Activated naive CD8-positive, alpha-beta T cell treated with anti-CD3 and anti-CD28 coated beads, Interleukin-2, amount 10 ng/mL, durations not matched to agents 7 days and 5 days (primary cell): ENCODE measurements at regions of chr1 and their contacts with region 1.

Region 1: DNA sequence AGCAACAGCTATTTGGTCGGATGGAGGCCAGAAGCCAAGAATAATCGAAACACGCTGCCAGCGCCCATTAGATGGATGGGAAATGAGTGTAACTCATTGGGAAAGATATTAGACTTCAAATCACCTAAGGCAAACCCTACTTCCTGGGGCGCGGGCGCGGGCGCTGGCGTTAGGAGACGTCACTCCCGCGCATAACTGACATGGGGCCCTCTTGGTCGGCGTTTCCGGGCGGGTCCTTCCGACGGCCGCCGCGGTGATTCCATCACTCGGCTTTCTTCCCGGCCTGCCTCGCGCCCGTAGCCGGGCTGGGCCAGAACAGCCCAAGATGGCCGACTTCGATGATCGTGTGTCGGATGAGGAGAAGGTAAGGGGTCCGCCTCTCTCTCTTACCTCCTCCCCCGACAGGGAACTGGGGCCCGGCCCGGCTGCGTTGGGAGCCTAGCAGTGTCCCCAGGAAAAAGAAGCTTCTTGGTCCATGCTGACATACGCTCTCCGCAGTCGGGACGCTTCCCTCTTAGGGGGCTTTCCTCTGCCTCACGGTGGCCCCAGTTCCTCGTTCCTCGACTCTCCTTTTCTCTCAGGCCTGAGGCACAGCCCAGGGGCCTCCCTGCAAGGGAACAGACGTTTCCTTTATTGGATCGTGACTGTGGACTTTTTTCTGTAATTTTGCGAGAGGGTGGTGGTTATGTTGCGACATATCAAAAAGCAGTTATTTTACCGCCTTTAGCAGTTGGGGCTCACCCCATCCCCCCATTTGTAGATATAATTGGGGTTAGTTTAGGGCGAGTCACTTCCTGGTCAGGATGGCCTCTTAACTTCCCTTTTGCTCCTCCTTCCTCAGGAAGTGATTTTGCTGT is at the start of gene CAPZA1:
- DNase-seq: peak; percentile 92
- ATAC-seq: peak; percentile 87
- H3K4me3 Mint-ChIP-seq: peak within 1 kb of the TSS; percentile 97
- H3K27ac Mint-ChIP-seq: peak within 1 kb of the TSS; percentile 100
- H3K4me1 Mint-ChIP-seq: peaks cover 35% of the 10 kb centered on the region
- H3K27me3 Mint-ChIP-seq: no peaks in the 10 kb centered on the region
- total RNA-seq, gene CAPZA1: 248 to 251 TPM

Region 2: DNA sequence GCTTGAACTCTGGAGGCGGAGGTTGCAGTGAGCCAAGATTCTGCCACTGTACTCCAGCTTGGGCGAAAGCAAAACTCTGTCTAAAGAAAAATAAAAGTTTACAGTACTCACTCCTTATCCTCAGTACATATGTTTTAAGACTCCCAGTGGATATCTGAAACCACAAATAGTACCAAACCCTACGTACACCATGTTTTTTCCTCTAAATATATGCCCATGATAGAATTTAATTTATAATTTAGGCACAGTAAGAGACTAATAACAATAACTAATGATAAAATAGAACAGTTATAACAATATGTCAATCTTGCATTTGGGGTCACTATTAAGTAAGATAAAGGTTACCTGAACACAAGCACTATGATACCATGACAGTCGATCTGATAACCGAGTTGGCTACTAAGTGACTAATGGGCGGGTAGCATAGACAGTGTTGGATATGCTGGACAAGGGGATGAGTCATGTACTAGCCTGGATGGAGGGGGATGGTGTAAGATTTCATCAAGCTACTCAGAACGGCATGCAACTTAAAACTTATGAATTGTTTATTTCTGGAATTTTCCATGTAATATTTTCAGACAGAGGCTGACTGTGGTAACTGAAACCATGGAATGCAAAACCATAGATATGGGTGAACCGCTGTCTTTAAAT is 44.5 kb before region 1 on chr1:
- POLR2A ChIA-PET with region 1: no interaction called
- DNase-seq: no peak
- ATAC-seq: no peak
- H3K4me3 Mint-ChIP-seq: no peak overlapping the region
- H3K27ac Mint-ChIP-seq: no peak overlapping the region
- H3K4me1 Mint-ChIP-seq: no peaks in the 10 kb centered on the region
- H3K27me3 Mint-ChIP-seq: no peaks in the 10 kb centered on the region

Region 3: GRCh38 chr1:112605633-112606327 is 14.0 kb before region 1 on chr1:
- POLR2A ChIA-PET with region 1: no interaction called
- DNase-seq: no peak
- ATAC-seq: no peak
- H3K4me3 Mint-ChIP-seq: no peak overlapping the region
- H3K27ac Mint-ChIP-seq: peak overlapping the region; percentile 14
- H3K4me1 Mint-ChIP-seq: peaks cover 3% of the 10 kb centered on the region
- H3K27me3 Mint-ChIP-seq: no peaks in the 10 kb centered on the region

Region 4: GRCh38 chr1:112704908-112705627 is 85.3 kb after region 1 on chr1:
- POLR2A ChIA-PET with region 1: interaction called, 35 read pairs
- DNase-seq: peak; percentile 60
- ATAC-seq: peak; percentile 81
- H3K4me3 Mint-ChIP-seq: peak overlapping the region; percentile 84
- H3K27ac Mint-ChIP-seq: peak overlapping the region; percentile 89
- H3K4me1 Mint-ChIP-seq: peaks cover 51% of the 10 kb centered on the region
- H3K27me3 Mint-ChIP-seq: peaks cover 23% of the 10 kb centered on the region